PC-3 (cell line): ENCODE measurements at regions of chr11 and their contacts with region 1.

Region 1: GRCh38 chr11:123174196-123175183 is 20.6 kb downstream of the CLMP start:
- DNase-seq: peak; percentile 97
- ATAC-seq: peak; percentile 50
- H3K4me3 ChIP-seq: no peak overlapping the region
- H3K27ac ChIP-seq: peak overlapping the region; percentile 81
- H3K4me1 ChIP-seq: peaks cover 49% of the 10 kb centered on the region
- H3K27me3 ChIP-seq: no peaks in the 10 kb centered on the region
- CTCF ChIP-seq: no peak

Region 2: GRCh38 chr11:123188508-123189165 is 14.1 kb after region 1 on chr11:
- CTCF ChIA-PET with region 1: no interaction called
- POLR2A ChIA-PET with region 1: no interaction called
- intact Hi-C with region 1: loop called (anchors 2 kb)
- DNase-seq: peak; percentile 61
- ATAC-seq: peak; percentile 67
- H3K4me3 ChIP-seq: peak overlapping the region; percentile 27; the same call in 1 of the 2 replicates
- H3K27ac ChIP-seq: peak overlapping the region; percentile 74
- H3K4me1 ChIP-seq: peaks cover 67% of the 10 kb centered on the region
- H3K27me3 ChIP-seq: no peaks in the 10 kb centered on the region
- CTCF ChIP-seq: no peak